ENCODE measurements at regions of chr19 and their contacts with region 1.

Region 1: DNA sequence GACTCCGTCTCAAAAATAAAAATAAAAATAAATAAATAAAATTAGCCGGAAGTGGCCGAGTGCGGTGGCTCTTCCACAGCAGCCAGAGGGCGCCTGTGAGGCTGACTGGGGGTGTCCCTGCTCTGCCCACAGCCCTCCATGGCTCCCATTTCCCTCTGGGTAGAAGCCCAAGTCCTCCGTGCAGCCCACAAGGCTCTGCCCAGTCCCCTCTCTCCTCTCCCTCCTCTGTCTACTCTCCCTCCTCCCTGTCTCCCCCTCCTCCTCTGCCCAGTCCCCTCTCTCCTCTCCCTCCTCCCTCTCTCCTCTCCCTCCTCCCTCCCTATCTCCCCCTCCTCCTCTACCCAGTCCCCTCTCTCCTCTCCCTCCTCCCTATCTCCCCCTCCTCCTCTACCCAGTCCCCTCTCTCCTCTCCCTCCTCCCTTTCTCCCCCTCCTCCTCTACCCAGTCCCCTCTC is 20.4 kb downstream of the MISP start:
- DNase-seq: no peak
- H3K4me3 ChIP-seq: no peak overlapping the region
- H3K27ac ChIP-seq: no peak overlapping the region
- H3K4me1 ChIP-seq: no peaks in the 10 kb centered on the region
- H3K27me3 ChIP-seq: peaks cover 0 to 14% (median 5%) of the 10 kb centered on the region in 3 donors
- CTCF ChIP-seq: no peak
- EP300 ChIP-seq: no peak
- POLR2A ChIP-seq: no peak

Region 2: GRCh38 chr19:860481-861101 is 89.2 kb after region 1 on chr19:
- intact Hi-C with region 1: loop called (anchors 5 kb)
- DNase-seq: peak; percentile 89
- H3K4me3 ChIP-seq: peak overlapping the region; percentile 16 to 45 (median 34)
- H3K27ac ChIP-seq: peak overlapping the region in 2 of 4 donors; percentile 61 to 78
- H3K4me1 ChIP-seq: peaks cover 0 to 41% (median 30%) of the 10 kb centered on the region in 4 donors
- H3K27me3 ChIP-seq: peaks cover 21 to 64% (median 42%) of the 10 kb centered on the region in 3 donors
- CTCF ChIP-seq: no peak
- EP300 ChIP-seq: no peak
- POLR2A ChIP-seq: no peak

Region 3: DNA sequence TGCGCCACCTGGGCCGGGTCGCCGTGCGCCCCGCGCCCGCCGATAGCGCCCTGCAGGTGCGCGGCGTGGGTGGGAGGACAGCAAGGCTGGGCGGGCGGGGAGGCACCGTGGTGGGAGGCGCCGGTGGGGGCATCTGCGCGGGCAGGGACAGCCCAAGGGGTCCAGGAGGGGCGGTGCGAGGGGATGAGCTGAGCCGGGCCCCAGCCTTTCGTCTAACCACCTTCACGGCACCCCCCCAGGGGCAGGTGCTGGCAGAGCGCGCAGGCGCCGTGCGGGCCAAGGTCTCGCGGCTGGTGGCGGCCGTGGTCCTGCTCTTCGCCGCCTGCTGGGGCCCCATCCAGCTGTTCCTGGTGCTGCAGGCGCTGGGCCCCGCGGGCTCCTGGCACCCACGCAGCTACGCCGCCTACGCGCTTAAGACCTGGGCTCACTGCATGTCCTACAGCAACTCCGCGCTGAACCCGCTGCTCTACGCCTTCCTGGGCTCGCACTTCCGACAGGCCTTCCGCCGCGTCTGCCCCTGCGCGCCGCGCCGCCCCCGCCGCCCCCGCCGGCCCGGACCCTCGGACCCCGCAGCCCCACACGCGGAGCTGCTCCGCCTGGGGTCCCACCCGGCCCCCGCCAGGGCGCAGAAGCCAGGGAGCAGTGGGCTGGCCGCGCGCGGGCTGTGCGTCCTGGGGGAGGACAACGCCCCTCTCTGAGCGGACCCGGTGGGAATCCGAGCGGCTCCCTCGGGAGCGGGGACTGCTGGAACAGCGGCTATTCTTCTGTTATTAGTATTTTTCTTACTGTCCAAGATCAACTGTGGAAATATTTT is 148.9 kb after region 1 on chr19:
- intact Hi-C with region 1: loop called (anchors 2 kb)
- DNase-seq: no peak
- H3K4me3 ChIP-seq: peak overlapping the region in 2 of 4 donors; percentile 9 to 23
- H3K27ac ChIP-seq: no peak overlapping the region
- H3K4me1 ChIP-seq: peaks cover 0 to 59% (median 53%) of the 10 kb centered on the region in 4 donors
- H3K27me3 ChIP-seq: peaks cover 42 to 52% (median 49%) of the 10 kb centered on the region in 3 donors
- CTCF ChIP-seq: no peak
- EP300 ChIP-seq: no peak
- POLR2A ChIP-seq: no peak

Region 4: GRCh38 chr19:984165-984967 is 213.0 kb after region 1 on chr19 and contains the start of gene WDR18:
- intact Hi-C with region 1: loop called (anchors 5 kb)
- DNase-seq: peak; percentile 97
- H3K4me3 ChIP-seq: peak within 1 kb of the TSS; percentile 76 to 92 (median 84)
- H3K27ac ChIP-seq: peak within 1 kb of the TSS; percentile 81 to 88 (median 86)
- H3K4me1 ChIP-seq: peaks cover 0 to 29% (median 26%) of the 10 kb centered on the region in 4 donors
- H3K27me3 ChIP-seq: no peaks in the 10 kb centered on the region
- CTCF ChIP-seq: peak in 1 of 4 experiments; percentile 28
- EP300 ChIP-seq: no peak
- POLR2A ChIP-seq: peak; percentile 8 to 49
- total RNA-seq, gene WDR18: 14.3 to 33.1 (median 30.4) TPM